ENCODE measurements at regions of chr2 and their contacts with region 1.

Region 1: GRCh38 chr2:105682401-105682800 is 62.3 kb upstream of the NCK2 start:
- DNase-seq: no peak
- H3K4me3 ChIP-seq: no peak overlapping the region
- H3K27ac ChIP-seq: no peak overlapping the region
- H3K4me1 ChIP-seq: no peaks in the 10 kb centered on the region
- H3K27me3 ChIP-seq: no peaks in the 10 kb centered on the region
- CTCF ChIP-seq: no peak

Region 2: DNA sequence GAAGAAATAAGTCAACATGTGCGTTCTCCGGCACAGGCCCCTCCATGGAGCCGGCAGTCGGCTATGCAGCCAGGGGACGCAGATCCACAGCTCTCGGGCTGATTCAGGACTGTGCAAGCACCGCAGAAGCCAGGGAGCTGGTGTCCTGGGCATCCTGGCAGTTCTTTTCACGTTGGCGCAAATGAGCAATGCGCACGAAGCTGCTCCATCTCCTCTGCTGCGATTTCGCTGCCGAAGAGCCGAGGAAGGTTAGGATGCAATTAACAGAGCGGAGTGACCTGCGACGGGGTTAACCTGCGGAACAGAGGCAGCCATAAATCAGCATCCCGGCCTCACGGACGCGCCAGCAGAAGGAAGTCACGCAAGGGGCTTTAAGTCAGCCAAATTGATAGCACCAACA is 935.5 kb before region 1 on chr2:
- CTCF ChIA-PET with region 1: no interaction called
- dilution Hi-C with region 1: no loop called
- in situ Hi-C with region 1: no loop called
- intact Hi-C with region 1: no loop called
- DNase-seq: no peak
- H3K4me3 ChIP-seq: no peak overlapping the region
- H3K27ac ChIP-seq: no peak overlapping the region
- H3K4me1 ChIP-seq: no peaks in the 10 kb centered on the region
- H3K27me3 ChIP-seq: peaks cover 3% of the 10 kb centered on the region
- CTCF ChIP-seq: no peak

Region 3: DNA sequence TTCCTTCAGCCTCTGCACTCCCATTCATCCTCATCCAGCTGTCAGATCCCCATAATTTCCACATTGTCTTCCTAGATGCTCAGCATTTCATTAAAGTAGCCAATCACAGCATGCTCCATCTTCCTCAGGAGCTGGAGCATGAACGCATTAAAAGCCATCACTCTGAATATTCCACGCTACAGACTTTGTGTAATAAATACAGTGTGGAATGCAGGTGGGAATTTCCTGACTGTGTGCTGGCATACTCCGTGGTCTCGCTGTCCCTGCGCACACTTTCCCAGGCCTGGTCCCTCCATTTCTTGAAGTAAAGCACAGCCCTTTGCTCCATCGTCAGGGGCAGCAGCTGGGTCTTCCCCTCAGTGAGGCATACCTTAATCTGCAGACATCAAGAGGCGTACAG is 61.4 kb before region 1 on chr2:
- CTCF ChIA-PET with region 1: no interaction called
- dilution Hi-C with region 1: loop called (anchors 5 kb)
- in situ Hi-C with region 1: no loop called
- intact Hi-C with region 1: no loop called
- DNase-seq: no peak
- H3K4me3 ChIP-seq: no peak overlapping the region
- H3K27ac ChIP-seq: no peak overlapping the region
- H3K4me1 ChIP-seq: no peaks in the 10 kb centered on the region
- H3K27me3 ChIP-seq: no peaks in the 10 kb centered on the region
- CTCF ChIP-seq: no peak

Region 4: GRCh38 chr2:105732101-105732500 is 49.7 kb after region 1 on chr2:
- CTCF ChIA-PET with region 1: no interaction called
- dilution Hi-C with region 1: no loop called
- in situ Hi-C with region 1: no loop called
- intact Hi-C with region 1: no loop called
- DNase-seq: peak; percentile 73
- H3K4me3 ChIP-seq: no peak overlapping the region
- H3K27ac ChIP-seq: no peak overlapping the region
- H3K4me1 ChIP-seq: peaks cover 45% of the 10 kb centered on the region
- H3K27me3 ChIP-seq: no peaks in the 10 kb centered on the region
- CTCF ChIP-seq: no peak

Measured in mammary epithelial cell (primary cell).